ENCODE measurements at regions of chr9 and their contacts with region 1.

Region 1: GRCh38 chr9:68555437-68556150 is 14.9 kb upstream of the TMEM252 start:
- DNase-seq: no peak
- ATAC-seq: no peak
- H3K4me3 Mint-ChIP-seq: no peak overlapping the region
- H3K27ac Mint-ChIP-seq: no peak overlapping the region
- H3K4me1 Mint-ChIP-seq: peaks cover 9% of the 10 kb centered on the region
- H3K27me3 Mint-ChIP-seq: peaks cover 6% of the 10 kb centered on the region
- CTCF ChIP-seq: no peak

Region 2: GRCh38 chr9:68567565-68567964 is 12.0 kb after region 1 on chr9:
- CTCF ChIA-PET with region 1: interaction called, 11 read pairs
- POLR2A ChIA-PET with region 1: no interaction called
- intact Hi-C with region 1: no loop called
- DNase-seq: no peak
- ATAC-seq: no peak
- H3K4me3 Mint-ChIP-seq: no peak overlapping the region
- H3K27ac Mint-ChIP-seq: no peak overlapping the region
- H3K4me1 Mint-ChIP-seq: no peaks in the 10 kb centered on the region
- H3K27me3 Mint-ChIP-seq: peaks cover 23% of the 10 kb centered on the region
- CTCF ChIP-seq: no peak